ENCODE measurements at regions of chr3 and their contacts with region 1.

Region 1: GRCh38 chr3:115217678-115218451 is 70.8 kb upstream of the ZBTB20 start:
- DNase-seq: peak; percentile 32
- ATAC-seq: peak; percentile 82
- H3K4me3 ChIP-seq: no peak overlapping the region
- H3K27ac ChIP-seq: no peak overlapping the region
- H3K4me1 ChIP-seq: peaks cover 15% of the 10 kb centered on the region
- H3K27me3 ChIP-seq: no peaks in the 10 kb centered on the region
- CTCF ChIP-seq: peak; percentile 71
- EP300 ChIP-seq: no peak
- POLR2A ChIP-seq: no peak
- RAD21 ChIP-seq: 0 out of 2 replicates have a peak, but pooled peaks have one; percentile 31

Region 2: GRCh38 chr3:115092220-115092791 is 125.6 kb before region 1 on chr3:
- CTCF ChIA-PET with region 1: no interaction called
- POLR2A ChIA-PET with region 1: no interaction called
- in situ Hi-C with region 1: no loop called
- intact Hi-C with region 1: loop called (anchors 10 kb)
- DNase-seq: peak; percentile 34
- ATAC-seq: peak; percentile 100
- H3K4me3 ChIP-seq: no peak overlapping the region
- H3K27ac ChIP-seq: no peak overlapping the region
- H3K4me1 ChIP-seq: no peaks in the 10 kb centered on the region
- H3K27me3 ChIP-seq: no peaks in the 10 kb centered on the region
- CTCF ChIP-seq: peak; percentile 65
- EP300 ChIP-seq: no peak
- POLR2A ChIP-seq: no peak
- RAD21 ChIP-seq: no peak

Region 3: DNA sequence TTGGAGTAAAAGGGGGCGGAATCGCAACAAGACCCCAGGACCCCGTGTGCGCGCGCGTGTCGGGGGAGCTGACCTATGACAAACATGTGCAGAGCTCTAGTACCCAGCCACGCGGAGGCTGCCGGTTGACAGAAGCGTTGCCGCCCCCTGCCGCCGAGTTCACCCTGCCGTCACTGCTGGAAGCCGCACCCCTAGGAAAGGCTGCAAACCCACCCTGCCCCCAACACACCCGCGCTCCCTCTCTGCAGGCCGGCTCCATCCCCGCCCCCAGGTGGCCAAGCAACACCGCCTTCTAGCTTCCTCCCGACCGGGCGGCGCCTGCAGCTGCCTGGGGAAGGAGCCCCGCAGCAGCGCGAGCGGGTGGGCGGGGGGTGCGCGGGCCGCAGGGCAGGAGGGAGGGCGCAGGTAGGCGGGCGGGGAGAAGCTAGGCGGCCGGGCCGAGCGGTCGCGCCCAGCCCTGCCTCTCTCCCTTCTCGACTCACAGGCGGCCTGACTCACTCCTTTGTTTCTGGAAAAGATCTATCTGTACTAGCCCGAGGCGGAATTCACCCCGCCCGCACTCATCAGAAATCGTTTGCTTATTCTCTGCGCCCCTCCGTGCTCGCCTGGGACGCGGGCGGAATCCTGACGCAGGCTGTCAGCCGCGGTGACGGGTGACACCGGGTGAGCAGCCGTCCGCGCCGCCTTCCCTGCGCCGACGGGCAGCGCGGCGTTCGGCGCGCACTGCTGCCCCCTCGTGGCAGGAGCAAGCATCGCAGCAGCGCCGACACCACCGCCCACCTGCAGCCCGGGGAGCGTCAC is 566.3 kb after region 1 on chr3:
- CTCF ChIA-PET with region 1: no interaction called
- POLR2A ChIA-PET with region 1: no interaction called
- in situ Hi-C with region 1: no loop called
- intact Hi-C with region 1: loop called (anchors 1 kb)
- DNase-seq: peak; percentile 87
- ATAC-seq: peak; percentile 96
- H3K4me3 ChIP-seq: peak overlapping the region; percentile 55 to 77 (median 70)
- H3K27ac ChIP-seq: peak overlapping the region; percentile 80
- H3K4me1 ChIP-seq: peaks cover 48% of the 10 kb centered on the region
- H3K27me3 ChIP-seq: no peaks in the 10 kb centered on the region
- CTCF ChIP-seq: peak; percentile 91
- EP300 ChIP-seq: peak in 1 of 2 experiments; percentile 61; a peak in 1 of 4 replicates
- POLR2A ChIP-seq: peak; percentile 14 to 64; a peak in 2 of 4 replicates
- RAD21 ChIP-seq: peak; percentile 91

Region 4: DNA sequence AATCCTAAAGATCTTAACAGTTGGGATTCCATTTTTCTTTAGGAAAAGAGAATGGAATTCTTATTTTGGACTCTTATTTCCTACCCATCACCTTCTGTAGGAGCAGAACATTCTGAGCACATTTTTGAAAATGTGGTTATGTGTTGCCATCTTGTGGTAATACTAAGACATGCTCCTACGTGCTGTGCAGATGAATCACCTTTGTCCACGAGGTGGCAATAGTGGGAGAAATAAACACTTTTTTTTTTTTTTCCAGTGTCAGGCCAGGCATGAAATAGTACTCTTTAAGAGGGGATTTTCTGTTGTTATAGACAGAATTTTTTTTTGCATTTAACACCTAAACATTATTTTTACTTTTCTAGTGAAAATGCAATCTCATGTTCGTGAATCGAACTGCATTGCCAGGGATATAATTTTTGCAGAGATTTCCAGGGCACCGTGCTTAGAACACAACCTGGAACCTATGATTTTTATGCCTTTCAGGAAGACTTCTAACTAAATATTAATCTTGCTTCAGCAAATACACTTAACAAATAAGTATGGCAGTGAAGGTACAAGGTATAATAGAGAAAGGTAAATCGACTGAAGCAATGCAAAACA is 602.0 kb after region 1 on chr3:
- CTCF ChIA-PET with region 1: interaction called, 6 read pairs
- POLR2A ChIA-PET with region 1: no interaction called
- in situ Hi-C with region 1: loop called (anchors 5 kb)
- intact Hi-C with region 1: no loop called
- DNase-seq: peak; percentile 81
- ATAC-seq: peak; percentile 68
- H3K4me3 ChIP-seq: no peak overlapping the region
- H3K27ac ChIP-seq: no peak overlapping the region
- H3K4me1 ChIP-seq: peaks cover 49% of the 10 kb centered on the region
- H3K27me3 ChIP-seq: no peaks in the 10 kb centered on the region
- CTCF ChIP-seq: peak; percentile 95
- EP300 ChIP-seq: 0 out of 4 replicates have a peak, but pooled peaks of 1 of the 2 experiments have one; percentile 19
- POLR2A ChIP-seq: no peak
- RAD21 ChIP-seq: peak; percentile 77